ENCODE measurements at regions of chr16 and their contacts with region 1.

Region 1: GRCh38 chr16:69890114-69890891 is 60.8 kb upstream of the CLEC18A start:
- DNase-seq: no peak
- ATAC-seq: no peak
- H3K4me3 ChIP-seq: no peak overlapping the region
- H3K27ac ChIP-seq: no peak overlapping the region
- H3K4me1 ChIP-seq: no peaks in the 10 kb centered on the region
- CTCF ChIP-seq: no peak
- EP300 ChIP-seq: no peak
- POLR2A ChIP-seq: no peak
- RAD21 ChIP-seq: no peak

Region 2: GRCh38 chr16:69726296-69727060 is 163.8 kb before region 1 on chr16 and contains the start of gene NQO1:
- CTCF ChIA-PET with region 1: no interaction called
- POLR2A ChIA-PET with region 1: no interaction called
- DNase-seq: peak; percentile 95 to 100
- ATAC-seq: peak; percentile 91 to 93
- H3K4me3 ChIP-seq: peak within 1 kb of the TSS; percentile 77
- H3K27ac ChIP-seq: peak within 1 kb of the TSS; percentile 95 to 99
- H3K4me1 ChIP-seq: peaks cover 31% of the 10 kb centered on the region
- CTCF ChIP-seq: no peak
- EP300 ChIP-seq: peak; percentile 62 to 86; a peak in 3 of 5 replicates
- POLR2A ChIP-seq: peak; percentile 99
- RAD21 ChIP-seq: peak in 1 of 2 experiments; percentile 12; a peak in 1 of 5 replicates
- polyA plus RNA-seq, gene NQO1: 1,834 and 2,226 TPM in 2 replicates

Region 3: DNA sequence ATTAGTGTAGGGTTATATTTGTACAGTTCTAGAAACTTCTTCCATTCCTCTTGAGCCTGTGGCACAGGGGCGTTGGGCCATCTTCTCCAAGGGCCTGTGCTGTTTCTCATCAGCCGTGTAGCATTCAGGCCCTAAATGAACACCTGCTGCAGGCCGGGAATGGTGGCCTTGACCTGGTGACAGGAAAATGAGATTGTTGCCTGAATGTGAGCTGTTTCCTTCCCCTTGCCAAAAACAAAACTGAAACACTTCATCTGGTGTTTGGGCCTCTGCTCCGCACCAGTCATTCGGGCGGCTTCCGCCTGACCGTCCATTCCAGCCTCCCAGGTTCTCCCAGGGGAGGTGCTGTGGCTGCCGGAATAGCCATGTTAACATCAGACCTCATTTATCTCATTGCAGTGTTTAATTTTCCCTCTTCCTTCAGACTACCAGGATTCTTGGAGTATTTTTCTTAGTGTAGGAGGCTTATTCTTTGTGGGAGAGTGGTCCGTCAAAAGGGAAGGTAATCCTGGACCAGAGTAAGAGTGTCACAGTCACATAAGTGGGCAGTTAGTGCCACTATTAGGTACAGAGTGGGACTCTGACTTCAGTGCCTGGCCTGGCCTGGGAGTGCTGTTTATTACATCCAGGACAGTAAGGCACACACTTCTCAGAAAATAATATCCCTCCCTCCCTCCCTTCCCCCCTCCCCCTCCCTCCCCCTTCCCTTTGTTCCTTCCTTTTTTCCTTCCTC is 66.3 kb before region 1 on chr16:
- CTCF ChIA-PET with region 1: no interaction called
- POLR2A ChIA-PET with region 1: interaction called, 11 read pairs
- DNase-seq: no peak
- ATAC-seq: peak in 1 of 2 experiments; percentile 36; a peak in 1 of 6 replicates
- H3K4me3 ChIP-seq: no peak overlapping the region
- H3K27ac ChIP-seq: peak overlapping the region in 1 of 2 experiments; percentile 11; a peak in 1 of 6 replicates
- H3K4me1 ChIP-seq: peaks cover 17% of the 10 kb centered on the region; the same call in 2 of the 3 replicates
- CTCF ChIP-seq: no peak
- EP300 ChIP-seq: no peak
- POLR2A ChIP-seq: no peak
- RAD21 ChIP-seq: no peak

Region 4: GRCh38 chr16:69906838-69907401 is 16.6 kb after region 1 on chr16:
- CTCF ChIA-PET with region 1: interaction called, 15 read pairs
- POLR2A ChIA-PET with region 1: no interaction called
- DNase-seq: no peak
- ATAC-seq: no peak
- H3K4me3 ChIP-seq: no peak overlapping the region
- H3K27ac ChIP-seq: no peak overlapping the region
- H3K4me1 ChIP-seq: peaks cover 3% of the 10 kb centered on the region; the same call in 1 of the 3 replicates
- CTCF ChIP-seq: no peak
- EP300 ChIP-seq: no peak
- POLR2A ChIP-seq: no peak
- RAD21 ChIP-seq: no peak

Region 5: DNA sequence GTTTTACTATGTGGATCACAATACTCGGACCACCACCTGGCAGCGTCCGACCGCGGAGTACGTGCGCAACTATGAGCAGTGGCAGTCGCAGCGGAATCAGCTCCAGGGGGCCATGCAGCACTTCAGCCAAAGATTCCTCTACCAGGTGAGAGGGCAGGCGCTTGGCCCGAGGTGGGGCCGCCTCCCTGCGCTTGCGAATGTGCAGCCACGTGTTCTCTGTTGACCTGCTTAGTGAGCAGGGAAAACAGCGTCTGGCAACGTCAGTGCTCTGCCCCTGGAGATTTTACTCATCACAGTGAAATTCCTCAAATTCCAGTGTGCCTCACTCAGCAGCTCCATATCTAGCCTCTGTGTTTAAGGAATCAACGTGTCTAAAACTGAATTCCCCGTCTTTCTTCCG is 27.4 kb after region 1 on chr16:
- CTCF ChIA-PET with region 1: no interaction called
- POLR2A ChIA-PET with region 1: no interaction called
- DNase-seq: peak; percentile 71 to 87
- ATAC-seq: peak; percentile 96 to 98
- H3K4me3 ChIP-seq: peak overlapping the region; percentile 1; the same call in 1 of the 3 replicates
- H3K27ac ChIP-seq: peak overlapping the region; percentile 59 to 84
- H3K4me1 ChIP-seq: peaks cover 21% of the 10 kb centered on the region
- CTCF ChIP-seq: no peak
- EP300 ChIP-seq: peak in 1 of 2 experiments; percentile 60; a peak in 1 of 5 replicates
- POLR2A ChIP-seq: no peak
- RAD21 ChIP-seq: peak in 1 of 2 experiments; percentile 22; a peak in 1 of 5 replicates

Measured in A549 (cell line).